A549 (cell line): ENCODE measurements at regions of chr16 and their contacts with region 1.

Region 1: DNA sequence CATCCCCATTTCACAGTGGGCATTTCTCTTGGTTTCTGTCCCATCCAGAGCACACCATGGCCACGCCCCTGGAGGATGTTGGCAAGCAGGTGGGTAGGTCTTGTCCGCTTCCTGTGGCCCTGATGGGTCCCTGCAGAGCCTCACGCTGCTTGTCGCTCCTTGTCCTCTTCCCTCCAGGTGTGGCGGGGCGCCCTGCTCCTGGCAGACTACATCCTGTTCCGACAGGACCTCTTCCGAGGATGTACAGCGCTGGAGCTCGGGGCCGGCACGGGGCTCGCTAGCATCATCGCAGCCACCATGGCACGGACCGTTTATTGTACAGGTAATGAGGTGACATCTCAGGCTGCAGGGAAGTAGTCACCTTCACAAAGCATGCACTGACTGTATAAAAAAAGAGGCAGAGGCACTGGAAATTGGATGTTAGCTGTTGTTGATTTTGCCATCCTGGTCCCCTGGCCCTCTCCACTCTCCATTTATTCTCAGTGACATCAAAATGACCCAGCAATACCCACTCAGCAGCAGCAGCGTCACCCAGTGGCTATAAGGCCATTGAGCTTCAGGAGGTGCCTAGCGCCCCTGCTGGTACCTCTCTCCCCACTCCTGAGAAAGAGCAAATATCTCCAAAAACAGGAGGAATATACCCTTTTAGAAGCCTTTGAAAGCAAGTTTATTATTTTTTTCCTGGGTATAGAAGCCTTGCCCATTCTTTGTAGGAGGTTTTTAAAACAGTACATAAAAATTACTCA is 13.7 kb downstream of the METTL22 start:
- DNase-seq: peak; percentile 48 to 64
- ATAC-seq: peak; percentile 87 to 93
- H3K4me3 ChIP-seq: no peak overlapping the region
- H3K27ac ChIP-seq: no peak overlapping the region
- H3K4me1 ChIP-seq: no peaks in the 10 kb centered on the region
- CTCF ChIP-seq: peak; percentile 61
- EP300 ChIP-seq: no peak
- POLR2A ChIP-seq: no peak
- RAD21 ChIP-seq: peak in 1 of 2 experiments; percentile 47; a peak in 3 of 5 replicates

Region 2: GRCh38 chr16:8548166-8548565 is 87.0 kb before region 1 on chr16:
- CTCF ChIA-PET with region 1: no interaction called
- POLR2A ChIA-PET with region 1: no interaction called
- DNase-seq: no peak
- ATAC-seq: no peak
- H3K4me3 ChIP-seq: no peak overlapping the region
- H3K27ac ChIP-seq: no peak overlapping the region
- H3K4me1 ChIP-seq: no peaks in the 10 kb centered on the region
- CTCF ChIP-seq: no peak
- EP300 ChIP-seq: no peak
- POLR2A ChIP-seq: no peak
- RAD21 ChIP-seq: no peak

Region 3: GRCh38 chr16:8621572-8622314 is 13.4 kb before region 1 on chr16 and contains the start of gene METTL22:
- CTCF ChIA-PET with region 1: interaction called, 12 read pairs
- POLR2A ChIA-PET with region 1: interaction called, 6 read pairs
- DNase-seq: peak; percentile 88 to 89
- ATAC-seq: peak; percentile 87 to 97
- H3K4me3 ChIP-seq: peak within 1 kb of the TSS; percentile 100
- H3K27ac ChIP-seq: peak within 1 kb of the TSS; percentile 94 to 98
- H3K4me1 ChIP-seq: peaks cover 15% of the 10 kb centered on the region
- CTCF ChIP-seq: no peak
- EP300 ChIP-seq: no peak
- POLR2A ChIP-seq: peak; percentile 76
- RAD21 ChIP-seq: no peak
- polyA plus RNA-seq, gene METTL22: 36.7 and 40.9 TPM in 2 replicates